Heart right ventricle (tissue), 16 donors: ENCODE measurements at regions of chr6 and their contacts with region 1.

Region 1: GRCh38 chr6:139219271-139219729 is 72.5 kb downstream of the TXLNB start:
- DNase-seq: peak; percentile 79 to 84
- ATAC-seq: peak; percentile 97 to 99 (median 98)
- H3K4me3 ChIP-seq: peak overlapping the region in 1 of 10 donors; percentile 2
- H3K27ac ChIP-seq: peak overlapping the region; percentile 17 to 81 (median 70)
- H3K4me1 ChIP-seq: peaks cover 0 to 18% (median 10%) of the 10 kb centered on the region in 9 donors
- H3K27me3 ChIP-seq: no peaks in the 10 kb centered on the region
- CTCF ChIP-seq: peak; percentile 65 to 95 (median 79)

Region 2: GRCh38 chr6:139124887-139125672 is 94.2 kb before region 1 on chr6:
- intact Hi-C with region 1: loop called in 2 of 10 experiments (anchors 2 to 5 kb)
- DNase-seq: peak; percentile 42 to 66
- ATAC-seq: peak; percentile 92 to 99 (median 97)
- H3K4me3 ChIP-seq: no peak overlapping the region
- H3K27ac ChIP-seq: peak overlapping the region in 4 of 10 donors; percentile 2 to 64 (median 23)
- H3K4me1 ChIP-seq: peaks cover 0 to 28% (median 6%) of the 10 kb centered on the region in 9 donors
- H3K27me3 ChIP-seq: no peaks in the 10 kb centered on the region
- CTCF ChIP-seq: peak; percentile 38 to 76 (median 63)